ENCODE measurements at regions of chr1 and their contacts with region 1.

Region 1: GRCh38 chr1:204733869-204734596 is 48.5 kb upstream of the LRRN2 start:
- DNase-seq: no peak
- ATAC-seq: no peak
- H3K4me3 ChIP-seq: no peak overlapping the region
- H3K4me3 Mint-ChIP-seq: no peak overlapping the region
- H3K27ac ChIP-seq: no peak overlapping the region
- H3K27ac Mint-ChIP-seq: no peak overlapping the region
- H3K4me1 ChIP-seq: no peaks in the 10 kb centered on the region
- H3K4me1 Mint-ChIP-seq: no peaks in the 10 kb centered on the region
- H3K27me3 ChIP-seq: peaks cover 0 to 8% of the 10 kb centered on the region in 2 experiments
- H3K27me3 Mint-ChIP-seq: peaks cover 19% of the 10 kb centered on the region
- CTCF ChIP-seq: no peak

Region 2: DNA sequence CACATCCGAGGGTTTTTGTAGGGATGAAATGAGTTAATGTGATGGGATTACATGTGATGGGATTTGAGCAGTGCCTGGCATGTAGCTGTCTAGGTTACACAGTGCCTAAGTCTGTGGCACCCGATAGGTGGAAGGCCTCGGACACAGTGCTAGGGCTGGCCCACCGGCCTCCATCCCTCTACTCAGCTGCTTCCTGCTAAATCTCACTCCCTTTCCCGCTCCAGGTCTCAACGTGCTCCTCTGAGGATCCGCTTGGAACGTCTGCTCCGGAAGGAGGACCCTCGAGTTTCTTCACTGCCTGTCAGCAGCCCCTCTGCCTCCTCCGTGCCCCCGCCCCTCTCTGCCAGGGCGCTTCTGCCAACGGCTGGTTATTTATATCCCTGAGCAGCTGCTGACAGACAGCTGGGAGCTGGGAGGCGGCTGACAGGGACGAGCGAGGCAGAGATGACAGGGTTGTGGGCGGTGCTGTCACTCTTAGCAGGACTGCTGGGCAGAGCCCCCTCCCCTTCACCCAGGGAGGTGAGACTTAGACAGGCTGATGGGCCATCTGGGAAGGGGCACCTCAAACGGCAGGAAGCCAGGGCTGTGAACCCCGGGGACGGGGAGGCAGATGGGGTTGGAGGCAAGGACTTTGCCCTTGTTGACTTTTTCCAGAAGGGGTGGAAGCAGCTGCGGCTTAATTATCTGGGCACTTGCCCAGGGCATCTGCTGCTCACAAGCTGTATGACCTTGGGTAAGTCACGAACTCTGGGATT is 21.9 kb before region 1 on chr1:
- CTCF ChIA-PET with region 1: no interaction called
- POLR2A ChIA-PET with region 1: no interaction called
- intact Hi-C with region 1: loop called in 1 of 2 experiments (anchors 2 kb)
- DNase-seq: no peak
- ATAC-seq: no peak
- H3K4me3 ChIP-seq: no peak overlapping the region
- H3K4me3 Mint-ChIP-seq: no peak overlapping the region
- H3K27ac ChIP-seq: no peak overlapping the region
- H3K27ac Mint-ChIP-seq: no peak overlapping the region
- H3K4me1 ChIP-seq: peaks cover 1% of the 10 kb centered on the region
- H3K4me1 Mint-ChIP-seq: peaks cover 17% of the 10 kb centered on the region
- H3K27me3 ChIP-seq: peaks cover 5 to 11% of the 10 kb centered on the region in 2 experiments
- H3K27me3 Mint-ChIP-seq: peaks cover 44% of the 10 kb centered on the region
- CTCF ChIP-seq: no peak

Measured in CD4-positive, alpha-beta T cell (primary cell).